Pancreas (tissue), 10 donors: ENCODE measurements at regions of chr10 and their contacts with region 1.

Region 1: DNA sequence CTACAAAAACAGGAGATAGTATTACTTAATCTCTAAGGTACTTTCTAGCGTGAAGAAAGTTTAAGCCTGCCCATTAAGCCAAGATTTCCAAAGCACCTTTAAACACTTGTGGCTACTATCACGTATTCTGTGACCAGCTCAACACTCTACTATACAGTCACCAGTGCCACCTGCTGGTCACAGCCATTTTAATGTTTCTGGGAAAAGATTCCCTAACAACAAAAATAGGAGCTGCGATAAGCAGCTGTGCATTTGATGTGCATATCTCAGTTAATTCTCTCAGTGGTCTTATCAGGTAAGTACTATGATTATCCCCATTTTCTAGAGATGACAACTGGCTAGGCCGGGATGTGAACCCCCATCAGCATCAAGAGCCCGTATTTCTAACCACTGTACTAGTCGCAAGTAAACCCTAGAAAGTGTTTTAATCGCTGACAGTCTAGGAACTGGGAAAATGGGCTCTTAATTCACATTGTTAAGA is 860 bp downstream of the SEC31B start:
- DNase-seq: peak in 5 of 6 donors; percentile 44 to 76 (median 65)
- ATAC-seq: peak; percentile 77 to 93 (median 89)
- H3K4me3 ChIP-seq: peak overlapping the region in 2 of 4 donors; percentile 6 to 48
- H3K27ac ChIP-seq: no peak overlapping the region
- H3K4me1 ChIP-seq: peaks cover 7 to 11% (median 7%) of the 10 kb centered on the region in 3 donors
- H3K27me3 ChIP-seq: no peaks in the 10 kb centered on the region
- CTCF ChIP-seq: peak in 3 of 4 donors; percentile 51 to 70 (median 67)

Region 2: GRCh38 chr10:100319707-100320106 is 199.1 kb before region 1 on chr10:
- intact Hi-C with region 1: no loop called
- DNase-seq: no peak
- ATAC-seq: no peak
- H3K4me3 ChIP-seq: no peak overlapping the region
- H3K27ac ChIP-seq: no peak overlapping the region
- H3K4me1 ChIP-seq: no peaks in the 10 kb centered on the region
- H3K27me3 ChIP-seq: peaks cover 0 to 3% (median 0%) of the 10 kb centered on the region in 4 donors
- CTCF ChIP-seq: no peak

Region 3: GRCh38 chr10:100446130-100446761 is 72.6 kb before region 1 on chr10:
- intact Hi-C with region 1: loop called in 1 of 3 experiments (anchors 10 kb)
- DNase-seq: no peak
- ATAC-seq: no peak
- H3K4me3 ChIP-seq: no peak overlapping the region
- H3K27ac ChIP-seq: no peak overlapping the region
- H3K4me1 ChIP-seq: no peaks in the 10 kb centered on the region
- H3K27me3 ChIP-seq: no peaks in the 10 kb centered on the region
- CTCF ChIP-seq: no peak